Activated naive CD4-positive, alpha-beta T cell treated with anti-CD3 and anti-CD28 coated beads for 36 hours (primary cell): ENCODE measurements at regions of chr1 and their contacts with region 1.

Region 1: GRCh38 chr1:175742790-175743459 is 470 bp downstream of the TNR start:
- DNase-seq: no peak
- H3K4me3 Mint-ChIP-seq: no peak overlapping the region
- H3K27ac Mint-ChIP-seq: no peak overlapping the region
- H3K4me1 Mint-ChIP-seq: no peaks in the 10 kb centered on the region
- H3K27me3 Mint-ChIP-seq: peaks cover 18% of the 10 kb centered on the region

Region 2: DNA sequence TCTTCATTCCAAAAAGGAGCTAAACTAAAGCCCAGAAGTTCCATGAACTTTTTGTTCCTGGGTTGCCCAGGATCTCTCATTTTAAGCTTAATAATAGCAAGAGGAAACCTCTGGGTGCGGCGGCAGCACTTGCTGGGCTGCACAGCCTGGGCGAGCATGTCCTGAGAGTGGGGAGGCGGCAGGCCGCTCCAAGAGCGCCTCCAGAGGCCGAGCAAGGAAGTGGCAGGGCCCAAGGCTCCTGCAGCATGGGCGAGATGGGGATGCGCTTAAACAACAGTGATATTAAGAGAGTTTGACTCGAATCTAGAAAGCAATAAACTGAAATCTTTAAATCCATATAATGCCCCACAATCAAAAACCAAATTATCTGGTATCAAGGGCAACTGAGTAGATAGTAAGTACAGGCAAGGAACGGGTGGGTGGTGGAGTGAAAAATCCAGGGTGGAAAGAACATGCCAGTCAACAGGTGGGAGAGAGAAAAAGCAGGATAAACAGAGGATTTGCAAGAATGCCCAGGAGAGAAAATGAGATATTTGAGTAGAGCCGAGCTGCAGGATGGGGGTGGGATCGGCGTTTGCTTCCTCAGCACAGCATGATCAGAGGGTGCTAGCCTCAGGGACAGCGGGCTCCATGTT is 14.6 kb after region 1 on chr1:
- CTCF ChIA-PET with region 1: interaction called, 10 read pairs
- intact Hi-C with region 1: no loop called
- DNase-seq: peak; percentile 36
- H3K4me3 Mint-ChIP-seq: no peak overlapping the region
- H3K27ac Mint-ChIP-seq: no peak overlapping the region
- H3K4me1 Mint-ChIP-seq: no peaks in the 10 kb centered on the region
- H3K27me3 Mint-ChIP-seq: peaks cover 7% of the 10 kb centered on the region